Activated CD4-positive, alpha-beta T cell treated with anti-CD3 and anti-CD28 coated beads for 36 hours (primary cell): ENCODE measurements at regions of chr19 and their contacts with region 1.

Region 1: DNA sequence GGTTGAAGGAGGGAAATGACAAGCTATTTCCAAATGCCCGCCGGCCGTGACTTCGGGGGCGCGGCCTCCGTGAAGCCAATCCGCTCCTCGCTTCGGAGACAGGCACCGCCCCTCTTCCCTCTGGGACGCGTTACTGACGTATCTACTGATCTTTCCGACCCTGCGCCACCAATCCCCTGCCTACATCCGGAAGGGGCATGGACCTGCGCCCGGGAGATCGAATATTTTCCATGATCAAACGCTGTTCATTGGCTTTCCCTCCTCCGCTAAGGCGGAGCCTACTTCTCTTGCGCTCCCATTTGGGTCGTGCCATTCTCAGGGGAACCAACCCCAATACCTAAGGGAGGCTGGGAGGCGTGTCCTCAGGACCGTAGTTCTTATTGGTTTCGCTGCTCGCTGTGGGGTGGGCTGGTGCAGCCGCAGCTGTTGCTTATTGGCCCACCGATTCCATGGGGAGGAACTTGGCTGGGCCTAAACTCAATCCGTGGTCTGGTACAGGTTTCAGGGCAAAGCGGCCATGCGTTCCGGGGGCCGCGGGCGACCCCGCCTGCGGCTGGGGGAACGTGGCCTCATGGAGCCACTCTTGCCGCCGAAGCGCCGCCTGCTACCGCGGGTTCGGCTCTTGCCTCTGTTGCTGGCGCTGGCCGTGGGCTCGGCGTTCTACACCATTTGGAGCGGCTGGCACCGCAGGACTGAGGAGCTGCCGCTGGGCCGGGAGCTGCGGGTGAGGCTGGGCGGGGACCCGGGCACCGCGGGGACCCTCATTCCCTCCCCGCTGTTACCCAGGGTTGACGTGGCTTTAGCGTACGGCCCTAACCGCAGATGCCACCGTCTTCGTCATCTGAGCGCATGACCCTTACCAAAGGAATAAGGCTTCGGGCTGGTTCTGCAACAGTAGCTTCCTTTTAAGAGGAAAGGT is at the start of gene QPCTL:
- DNase-seq: peak; percentile 99
- ATAC-seq: peak; percentile 92
- H3K4me3 Mint-ChIP-seq: peak within 1 kb of the TSS; percentile 89
- H3K27ac Mint-ChIP-seq: peak within 1 kb of the TSS; percentile 97
- H3K4me1 Mint-ChIP-seq: peaks cover 21% of the 10 kb centered on the region
- H3K27me3 Mint-ChIP-seq: no peaks in the 10 kb centered on the region
- total RNA-seq, gene QPCTL: 17.3 to 18.7 TPM

Region 2: GRCh38 chr19:43855616-43856015 is 1836.8 kb before region 1 on chr19:
- CTCF ChIA-PET with region 1: no interaction called
- POLR2A ChIA-PET with region 1: no interaction called
- intact Hi-C with region 1: no loop called
- DNase-seq: no peak
- ATAC-seq: no peak
- H3K4me3 Mint-ChIP-seq: no peak overlapping the region
- H3K27ac Mint-ChIP-seq: no peak overlapping the region
- H3K4me1 Mint-ChIP-seq: no peaks in the 10 kb centered on the region
- H3K27me3 Mint-ChIP-seq: no peaks in the 10 kb centered on the region

Region 3: DNA sequence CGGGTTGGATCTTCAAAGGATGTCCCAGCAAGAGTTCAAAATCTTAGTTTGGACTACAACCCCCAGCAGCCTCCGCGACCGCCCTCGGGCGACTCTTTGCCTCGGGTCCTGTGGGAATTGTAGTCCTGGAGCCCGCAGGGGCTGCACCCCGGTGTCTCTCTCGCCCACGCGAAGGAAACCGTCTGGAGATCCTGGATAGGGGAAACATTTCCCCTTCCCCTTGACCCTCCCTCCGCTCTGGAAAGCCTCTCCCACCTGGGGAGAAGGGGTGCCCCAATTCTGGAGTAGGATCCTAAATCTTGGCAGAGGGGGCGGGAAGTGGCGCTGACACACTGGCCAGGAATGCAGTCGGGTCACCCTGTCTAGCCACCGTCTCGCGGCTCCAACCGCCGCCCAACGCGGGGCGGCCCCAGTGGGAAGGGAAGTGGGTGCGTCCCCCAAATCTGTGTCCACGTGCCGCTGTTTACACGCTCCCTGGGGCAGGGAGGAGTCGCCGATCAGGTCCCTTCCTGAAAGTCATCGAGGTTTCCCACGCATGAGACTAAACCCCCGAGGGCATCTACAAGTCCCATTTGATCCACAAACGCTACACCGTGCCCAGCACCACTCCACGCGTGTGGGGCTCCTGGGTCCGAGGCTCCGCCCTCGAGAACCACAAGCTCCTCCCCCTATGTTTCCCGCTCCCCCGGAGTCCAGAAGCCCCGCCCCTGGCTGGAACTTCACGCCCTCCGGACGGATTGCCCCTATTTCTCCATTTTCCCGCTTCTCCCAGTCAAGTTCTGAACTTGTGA is 286.8 kb before region 1 on chr19:
- CTCF ChIA-PET with region 1: no interaction called
- POLR2A ChIA-PET with region 1: no interaction called
- intact Hi-C with region 1: loop called in 1 of 2 experiments (anchors 1 kb)
- DNase-seq: peak; percentile 91
- ATAC-seq: peak; percentile 59
- H3K4me3 Mint-ChIP-seq: peak overlapping the region; percentile 95
- H3K27ac Mint-ChIP-seq: peak overlapping the region; percentile 97
- H3K4me1 Mint-ChIP-seq: peaks cover 34% of the 10 kb centered on the region
- H3K27me3 Mint-ChIP-seq: peaks cover 23% of the 10 kb centered on the region

Region 4: GRCh38 chr19:45485305-45486077 is 207.0 kb before region 1 on chr19:
- CTCF ChIA-PET with region 1: interaction called, 7 read pairs
- POLR2A ChIA-PET with region 1: no interaction called
- intact Hi-C with region 1: loop called in 1 of 2 experiments (anchors 1 kb)
- DNase-seq: peak; percentile 100
- ATAC-seq: peak; percentile 99
- H3K4me3 Mint-ChIP-seq: peak overlapping the region; percentile 83
- H3K27ac Mint-ChIP-seq: peak overlapping the region; percentile 91
- H3K4me1 Mint-ChIP-seq: peaks cover 13% of the 10 kb centered on the region
- H3K27me3 Mint-ChIP-seq: peaks cover 2% of the 10 kb centered on the region

Region 5: GRCh38 chr19:45643024-45643926 is 49.2 kb before region 1 on chr19:
- CTCF ChIA-PET with region 1: interaction called, 12 read pairs
- POLR2A ChIA-PET with region 1: interaction called, 13 read pairs
- intact Hi-C with region 1: loop called (anchors 1 kb)
- DNase-seq: peak; percentile 97
- ATAC-seq: peak; percentile 54
- H3K4me3 Mint-ChIP-seq: peak overlapping the region; percentile 94
- H3K27ac Mint-ChIP-seq: peak overlapping the region; percentile 93
- H3K4me1 Mint-ChIP-seq: peaks cover 57% of the 10 kb centered on the region
- H3K27me3 Mint-ChIP-seq: no peaks in the 10 kb centered on the region

Region 6: GRCh38 chr19:45730389-45731288 is 38.2 kb after region 1 on chr19 and contains the start of gene FBXO46:
- CTCF ChIA-PET with region 1: interaction called, 3 read pairs
- POLR2A ChIA-PET with region 1: interaction called, 7 read pairs
- intact Hi-C with region 1: loop called (anchors 1 to 2 kb)
- DNase-seq: peak; percentile 97
- ATAC-seq: peak; percentile 99
- H3K4me3 Mint-ChIP-seq: peak within 1 kb of the TSS; percentile 88
- H3K27ac Mint-ChIP-seq: peak within 1 kb of the TSS; percentile 90
- H3K4me1 Mint-ChIP-seq: peaks cover 35% of the 10 kb centered on the region
- H3K27me3 Mint-ChIP-seq: no peaks in the 10 kb centered on the region
- total RNA-seq, gene FBXO46: 32.3 to 43.3 TPM

Region 7: GRCh38 chr19:45902651-45903625 is 210.5 kb after region 1 on chr19:
- CTCF ChIA-PET with region 1: interaction called, 4 read pairs
- POLR2A ChIA-PET with region 1: no interaction called
- intact Hi-C with region 1: loop called in 1 of 2 experiments (anchors 1 kb)
- DNase-seq: peak; percentile 100
- ATAC-seq: peak; percentile 88
- H3K4me3 Mint-ChIP-seq: peak overlapping the region; percentile 88
- H3K27ac Mint-ChIP-seq: peak overlapping the region; percentile 75
- H3K4me1 Mint-ChIP-seq: peaks cover 16% of the 10 kb centered on the region
- H3K27me3 Mint-ChIP-seq: no peaks in the 10 kb centered on the region

Region 8: GRCh38 chr19:46288896-46289588 is 596.6 kb after region 1 on chr19:
- CTCF ChIA-PET with region 1: no interaction called
- POLR2A ChIA-PET with region 1: no interaction called
- intact Hi-C with region 1: no loop called
- DNase-seq: no peak
- ATAC-seq: peak; percentile 33
- H3K4me3 Mint-ChIP-seq: no peak overlapping the region
- H3K27ac Mint-ChIP-seq: no peak overlapping the region
- H3K4me1 Mint-ChIP-seq: no peaks in the 10 kb centered on the region
- H3K27me3 Mint-ChIP-seq: peaks cover 3% of the 10 kb centered on the region